GM12878 (cell line): ENCODE measurements at regions of chr9 and their contacts with region 1.

Region 1: DNA sequence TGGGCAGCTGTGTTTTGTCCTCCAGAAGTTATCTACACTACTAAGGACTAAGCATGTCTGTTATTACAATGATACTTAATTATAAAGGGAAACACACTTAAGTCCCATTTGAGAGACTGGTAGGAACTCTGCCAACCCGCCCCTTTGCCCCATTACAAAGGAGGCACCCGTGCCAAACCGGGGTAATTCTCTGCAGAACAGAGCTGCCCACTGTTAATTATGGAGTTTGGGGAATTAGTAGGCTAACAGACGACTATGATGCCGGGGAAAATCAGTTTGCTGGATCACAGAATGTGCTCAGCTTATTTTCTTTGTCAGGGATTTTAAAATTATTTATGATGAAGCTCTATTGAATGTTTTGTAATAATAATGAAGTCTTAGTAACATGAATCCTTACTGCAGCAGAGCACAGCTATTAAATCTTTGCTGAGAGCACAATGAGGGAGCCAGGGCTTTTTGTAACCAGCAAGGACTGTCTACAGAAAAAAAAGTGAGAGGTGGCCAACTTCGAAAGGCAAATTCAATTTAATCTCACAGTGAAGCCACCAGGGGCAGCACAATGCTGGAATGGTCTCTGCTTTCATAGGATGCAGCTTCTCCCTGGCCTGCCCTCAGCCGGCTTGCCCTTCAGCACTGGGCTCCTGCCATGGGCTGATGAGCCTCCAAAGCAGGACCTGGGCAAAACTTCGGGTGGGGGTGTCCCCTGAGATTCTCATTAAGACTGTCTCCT is 134.5 kb downstream of the GNAQ start:
- DNase-seq: no peak
- ATAC-seq: peak; percentile 36
- H3K4me3 ChIP-seq: no peak overlapping the region
- H3K27ac ChIP-seq: no peak overlapping the region
- H3K4me1 ChIP-seq: no peaks in the 10 kb centered on the region
- H3K27me3 ChIP-seq: no peaks in the 10 kb centered on the region
- CTCF ChIP-seq: peak in 2 of 3 experiments; percentile 6 to 7; a peak in 1 of 6 replicates
- EP300 ChIP-seq: no peak
- POLR2A ChIP-seq: no peak
- RAD21 ChIP-seq: no peak

Region 2: DNA sequence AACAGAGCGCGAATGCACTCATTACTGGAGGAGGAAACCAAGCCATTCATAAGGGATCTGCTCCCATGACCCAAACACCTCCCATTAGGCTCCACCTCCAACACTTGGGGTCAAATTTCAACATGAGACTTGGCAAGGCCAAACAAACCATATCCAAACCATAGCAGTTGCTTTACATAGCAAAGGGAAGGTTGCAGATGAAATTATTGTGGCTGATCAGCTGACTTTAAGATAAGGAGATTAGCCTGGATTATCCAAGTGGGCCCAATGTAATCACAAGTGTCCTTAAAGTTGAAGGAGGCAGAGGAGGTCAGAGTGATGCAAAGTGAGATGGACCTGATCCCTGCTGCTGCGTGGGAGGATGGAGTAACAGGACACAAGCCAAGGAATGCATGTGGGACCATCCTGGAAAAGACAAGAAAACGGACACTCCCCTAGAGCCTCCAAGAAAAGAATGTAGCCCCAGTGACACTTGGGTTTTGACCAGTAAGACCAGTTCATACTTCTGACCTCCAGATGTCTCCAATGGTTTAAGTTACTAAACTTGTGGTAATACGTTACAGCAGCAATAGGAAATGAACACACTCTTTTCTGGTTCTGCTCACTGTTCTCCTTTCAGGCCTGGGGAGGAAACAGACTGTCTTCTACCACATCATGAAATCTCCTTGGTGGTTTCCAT is 32.8 kb before region 1 on chr9:
- CTCF ChIA-PET with region 1: interaction called, 15 read pairs
- POLR2A ChIA-PET with region 1: interaction called, 11 read pairs
- RAD21 ChIA-PET with region 1: interaction called, 12 read pairs
- SMC1A ChIA-PET with region 1: interaction called, 19 read pairs
- in situ Hi-C with region 1: no loop called
- intact Hi-C with region 1: no loop called
- DNase-seq: no peak
- ATAC-seq: peak; percentile 92
- H3K4me3 ChIP-seq: no peak overlapping the region
- H3K27ac ChIP-seq: no peak overlapping the region
- H3K4me1 ChIP-seq: no peaks in the 10 kb centered on the region
- H3K27me3 ChIP-seq: no peaks in the 10 kb centered on the region
- CTCF ChIP-seq: peak in 2 of 3 experiments; percentile 26 to 42; a peak in 3 of 6 replicates
- EP300 ChIP-seq: no peak
- POLR2A ChIP-seq: no peak
- RAD21 ChIP-seq: peak; percentile 68

Region 3: DNA sequence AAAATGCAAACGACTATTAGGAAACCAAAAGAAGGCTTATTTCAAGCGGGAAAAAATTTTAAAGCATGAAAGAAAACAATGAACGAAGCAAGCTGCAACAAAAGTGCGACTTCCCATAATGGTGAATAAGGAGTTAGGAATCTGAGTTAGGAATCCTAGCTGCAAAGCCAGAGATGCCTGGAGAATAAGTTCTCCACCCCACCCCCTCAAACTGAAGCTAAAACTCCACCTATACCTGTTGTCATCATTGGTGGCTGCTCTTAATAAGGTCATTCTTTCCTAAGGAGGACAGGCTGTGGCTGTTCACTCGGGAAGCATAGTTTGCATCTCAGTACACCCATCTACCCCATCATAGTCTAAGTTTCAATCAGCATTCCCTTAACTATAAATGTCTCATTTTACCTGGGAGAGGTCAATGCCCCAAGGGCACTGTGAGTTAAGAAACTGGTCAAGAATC is 12.7 kb before region 1 on chr9:
- CTCF ChIA-PET with region 1: interaction called, 13 read pairs
- POLR2A ChIA-PET with region 1: interaction called, 22 read pairs
- RAD21 ChIA-PET with region 1: interaction called, 26 read pairs
- SMC1A ChIA-PET with region 1: interaction called, 35 read pairs
- in situ Hi-C with region 1: no loop called
- intact Hi-C with region 1: no loop called
- DNase-seq: no peak
- ATAC-seq: no peak
- H3K4me3 ChIP-seq: no peak overlapping the region
- H3K27ac ChIP-seq: no peak overlapping the region
- H3K4me1 ChIP-seq: no peaks in the 10 kb centered on the region
- H3K27me3 ChIP-seq: no peaks in the 10 kb centered on the region
- CTCF ChIP-seq: no peak
- EP300 ChIP-seq: no peak
- POLR2A ChIP-seq: no peak
- RAD21 ChIP-seq: no peak

Region 4: DNA sequence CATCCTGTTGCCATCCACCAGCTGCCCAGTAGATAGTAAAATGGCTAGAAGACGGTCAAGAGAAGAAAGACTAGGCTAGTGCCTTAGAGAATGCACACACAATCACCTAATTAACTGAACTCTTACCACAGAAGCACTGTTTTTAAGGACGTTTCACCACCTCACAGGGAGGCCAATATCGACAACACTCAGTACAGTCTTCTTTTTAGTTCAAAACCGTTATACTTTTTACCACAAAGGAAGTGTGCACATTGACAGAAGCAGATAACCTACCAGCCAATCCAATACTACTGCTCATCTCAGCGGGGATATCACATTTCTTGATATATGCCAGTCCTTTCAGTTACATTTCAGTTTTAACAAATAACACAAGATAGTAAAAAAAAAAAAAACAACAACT is 12.2 kb after region 1 on chr9:
- CTCF ChIA-PET with region 1: interaction called, 44 read pairs
- POLR2A ChIA-PET with region 1: interaction called, 5 read pairs
- RAD21 ChIA-PET with region 1: interaction called, 69 read pairs
- SMC1A ChIA-PET with region 1: interaction called, 71 read pairs
- in situ Hi-C with region 1: no loop called
- intact Hi-C with region 1: no loop called
- DNase-seq: no peak
- ATAC-seq: peak; percentile 71
- H3K4me3 ChIP-seq: no peak overlapping the region
- H3K27ac ChIP-seq: no peak overlapping the region
- H3K4me1 ChIP-seq: no peaks in the 10 kb centered on the region
- H3K27me3 ChIP-seq: no peaks in the 10 kb centered on the region
- CTCF ChIP-seq: no peak
- EP300 ChIP-seq: no peak
- POLR2A ChIP-seq: no peak
- RAD21 ChIP-seq: no peak

Region 5: GRCh38 chr9:77916410-77916819 is 19.3 kb after region 1 on chr9:
- CTCF ChIA-PET with region 1: interaction called, 44 read pairs
- POLR2A ChIA-PET with region 1: interaction called, 8 read pairs
- RAD21 ChIA-PET with region 1: interaction called, 69 read pairs
- SMC1A ChIA-PET with region 1: interaction called, 56 read pairs
- in situ Hi-C with region 1: no loop called
- intact Hi-C with region 1: no loop called
- DNase-seq: peak; percentile 24
- ATAC-seq: peak; percentile 89
- H3K4me3 ChIP-seq: no peak overlapping the region
- H3K27ac ChIP-seq: no peak overlapping the region; the same call in 1 of the 2 replicates
- H3K4me1 ChIP-seq: peaks cover 7% of the 10 kb centered on the region
- H3K27me3 ChIP-seq: no peaks in the 10 kb centered on the region
- CTCF ChIP-seq: no peak
- EP300 ChIP-seq: peak; percentile 72 to 86; a peak in 3 of 4 replicates
- POLR2A ChIP-seq: no peak
- RAD21 ChIP-seq: no peak

Region 6: DNA sequence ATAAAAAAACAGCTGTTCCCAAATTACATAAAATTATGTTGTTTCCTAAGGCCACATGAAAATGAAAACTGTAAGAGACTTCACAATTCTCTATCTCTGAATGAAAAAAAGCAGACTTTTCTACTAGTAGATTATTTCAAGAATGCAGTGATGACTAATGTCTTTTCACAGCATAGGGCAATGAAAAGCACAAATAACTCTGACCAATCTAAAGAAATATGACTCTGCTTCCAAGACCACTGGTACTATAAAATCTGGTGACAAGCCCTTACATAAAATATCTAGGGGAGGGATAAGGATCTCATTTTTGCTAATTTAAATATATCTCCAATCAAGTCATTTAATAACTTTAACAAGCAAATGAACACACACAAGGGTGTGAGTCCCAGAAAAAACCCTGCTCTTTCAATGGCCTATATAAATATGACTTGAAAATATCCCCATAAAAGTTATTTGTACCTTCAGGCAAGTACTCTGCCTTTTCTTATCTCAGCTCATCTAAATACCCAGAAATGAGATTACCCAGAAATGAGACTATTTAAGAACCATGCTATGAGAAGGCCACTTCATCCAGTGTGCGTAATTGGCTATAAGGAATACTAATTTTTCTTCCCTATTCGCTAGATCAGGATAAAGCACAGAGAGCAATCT is 29.3 kb after region 1 on chr9:
- CTCF ChIA-PET with region 1: interaction called, 7 read pairs
- POLR2A ChIA-PET with region 1: interaction called, 3 read pairs
- RAD21 ChIA-PET with region 1: interaction called, 5 read pairs
- SMC1A ChIA-PET with region 1: interaction called, 10 read pairs
- in situ Hi-C with region 1: no loop called
- intact Hi-C with region 1: no loop called
- DNase-seq: no peak
- ATAC-seq: peak; percentile 31; the same call in 1 of the 3 replicates
- H3K4me3 ChIP-seq: no peak overlapping the region
- H3K27ac ChIP-seq: no peak overlapping the region
- H3K4me1 ChIP-seq: no peaks in the 10 kb centered on the region
- H3K27me3 ChIP-seq: no peaks in the 10 kb centered on the region
- CTCF ChIP-seq: no peak
- EP300 ChIP-seq: no peak
- POLR2A ChIP-seq: no peak
- RAD21 ChIP-seq: no peak